Body of pancreas (tissue), 4 donors: ENCODE measurements at regions of chr19 and their contacts with region 1.

Region 1: GRCh38 chr19:18339723-18340122 is 675 bp upstream of the PGPEP1 start:
- DNase-seq: no peak
- ATAC-seq: no peak
- H3K4me3 ChIP-seq: no peak overlapping the region
- H3K27ac ChIP-seq: peak overlapping the region in 2 of 4 donors; percentile 78 to 89
- H3K4me1 ChIP-seq: peaks cover 32% of the 10 kb centered on the region
- H3K27me3 ChIP-seq: no peaks in the 10 kb centered on the region
- CTCF ChIP-seq: peak in 2 of 7 experiments; percentile 14 to 16
- POLR2A ChIP-seq: no peak

Region 2: GRCh38 chr19:18251587-18252369 is 87.9 kb before region 1 on chr19:
- intact Hi-C with region 1: no loop called
- DNase-seq: peak; percentile 73 to 83 (median 78)
- ATAC-seq: peak; percentile 78
- H3K4me3 ChIP-seq: no peak overlapping the region
- H3K27ac ChIP-seq: no peak overlapping the region
- H3K4me1 ChIP-seq: peaks cover 10% of the 10 kb centered on the region
- H3K27me3 ChIP-seq: no peaks in the 10 kb centered on the region
- CTCF ChIP-seq: peak; percentile 87 to 96 (median 90)
- POLR2A ChIP-seq: no peak

Region 3: GRCh38 chr19:18279516-18280273 is 60.0 kb before region 1 on chr19:
- intact Hi-C with region 1: loop called (anchors 10 kb)
- DNase-seq: peak; percentile 91 to 94 (median 92)
- ATAC-seq: peak; percentile 49
- H3K4me3 ChIP-seq: peak overlapping the region; percentile 65 to 90
- H3K27ac ChIP-seq: peak overlapping the region; percentile 97 to 100 (median 100)
- H3K4me1 ChIP-seq: peaks cover 57% of the 10 kb centered on the region
- H3K27me3 ChIP-seq: no peaks in the 10 kb centered on the region
- CTCF ChIP-seq: peak; percentile 49 to 92 (median 81)
- POLR2A ChIP-seq: peak; percentile 84 to 94 (median 87)

Region 4: DNA sequence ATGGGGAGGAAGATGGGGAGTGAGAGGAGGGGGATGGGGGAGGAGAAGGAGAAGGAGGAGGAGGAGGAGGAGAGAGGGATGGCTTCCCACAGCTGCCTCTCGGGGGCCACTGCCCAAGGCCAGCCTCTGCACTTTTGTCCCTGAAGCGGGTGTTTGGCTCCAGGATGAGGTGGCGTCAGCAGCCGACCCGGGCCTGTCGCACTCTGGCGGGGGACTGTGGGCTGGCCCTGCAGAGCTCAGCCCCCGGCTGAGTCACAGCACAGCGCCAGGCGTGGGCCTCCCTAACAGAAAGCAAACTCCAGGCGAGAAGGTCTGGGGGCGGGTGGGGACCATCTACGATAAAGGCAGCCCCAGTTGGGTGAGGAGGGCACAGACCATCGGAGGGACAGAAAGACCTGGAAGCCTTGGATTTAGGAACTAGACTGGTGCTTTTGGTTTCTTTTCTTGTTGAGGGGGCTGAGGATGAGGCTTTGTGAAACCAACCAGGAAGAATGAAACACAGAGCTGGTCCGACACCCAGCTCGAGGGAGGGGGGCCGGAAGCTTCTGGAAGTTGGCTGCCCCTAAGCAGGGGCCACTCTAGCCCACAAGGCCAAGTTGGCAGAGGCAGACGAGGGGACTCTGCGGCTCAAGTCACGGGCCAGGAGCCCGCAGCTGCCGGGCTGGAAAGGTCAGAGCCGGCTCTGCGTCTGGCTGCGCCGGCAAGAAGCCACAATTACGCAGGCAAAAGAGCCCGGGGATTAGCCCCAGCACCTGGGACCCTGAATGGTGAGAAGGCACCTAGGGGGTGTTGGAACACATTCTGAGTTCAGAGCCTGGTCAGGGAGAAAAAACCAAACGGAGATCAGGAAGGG is 35.0 kb before region 1 on chr19:
- intact Hi-C with region 1: no loop called
- DNase-seq: peak; percentile 54 to 89 (median 74)
- ATAC-seq: peak; percentile 73
- H3K4me3 ChIP-seq: no peak overlapping the region
- H3K27ac ChIP-seq: peak overlapping the region; percentile 83 to 90 (median 86)
- H3K4me1 ChIP-seq: peaks cover 33% of the 10 kb centered on the region
- H3K27me3 ChIP-seq: no peaks in the 10 kb centered on the region
- CTCF ChIP-seq: no peak
- POLR2A ChIP-seq: peak; percentile 45 to 67 (median 60)